Colonic mucosa (tissue), 4 donors: ENCODE measurements at regions of chr3 and their contacts with region 1.

Region 1: GRCh38 chr3:152269426-152270188 is 878 bp downstream of the MBNL1 start:
- DNase-seq: peak; percentile 76
- H3K4me3 ChIP-seq: peak overlapping the region; percentile 70
- H3K27ac ChIP-seq: peak overlapping the region; percentile 100
- H3K4me1 ChIP-seq: peaks cover 7% of the 10 kb centered on the region
- H3K27me3 ChIP-seq: no peaks in the 10 kb centered on the region
- CTCF ChIP-seq: no peak

Region 2: GRCh38 chr3:152309535-152310307 is 40.1 kb after region 1 on chr3:
- intact Hi-C with region 1: loop called (anchors 5 kb)
- DNase-seq: no peak
- H3K4me3 ChIP-seq: no peak overlapping the region
- H3K27ac ChIP-seq: peak overlapping the region; percentile 78
- H3K4me1 ChIP-seq: peaks cover 17% of the 10 kb centered on the region
- H3K27me3 ChIP-seq: no peaks in the 10 kb centered on the region
- CTCF ChIP-seq: no peak

Region 3: DNA sequence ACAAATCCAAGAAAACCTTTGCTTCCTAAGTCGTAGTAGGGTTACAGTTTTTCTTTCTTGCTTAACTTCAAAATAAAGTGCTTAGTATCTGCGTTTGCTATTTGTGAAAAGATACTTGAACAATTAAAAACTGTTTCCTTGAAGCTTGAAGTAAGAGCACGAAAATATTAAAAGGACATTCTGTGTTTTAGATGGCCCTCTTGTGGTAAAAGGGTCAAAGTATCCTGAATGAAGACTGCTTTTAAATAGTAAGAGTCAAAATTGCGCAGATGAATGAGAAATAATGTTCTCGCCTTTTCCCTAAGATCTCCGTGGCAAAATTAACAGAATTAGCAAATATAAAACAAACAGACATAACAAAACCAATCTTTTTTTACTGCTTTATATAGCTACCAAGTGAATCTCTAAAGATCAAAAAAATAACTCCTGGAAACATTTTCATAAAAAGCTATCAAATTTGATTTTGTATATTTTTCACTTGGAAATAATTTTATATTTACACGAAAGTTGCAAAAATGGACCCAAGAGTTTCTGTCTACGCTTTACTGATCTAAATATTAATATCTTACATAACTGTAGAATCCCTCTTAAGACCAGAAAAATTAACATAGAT is 174.5 kb after region 1 on chr3:
- intact Hi-C with region 1: loop called (anchors 10 kb)
- DNase-seq: no peak
- H3K4me3 ChIP-seq: no peak overlapping the region
- H3K27ac ChIP-seq: no peak overlapping the region
- H3K4me1 ChIP-seq: no peaks in the 10 kb centered on the region
- H3K27me3 ChIP-seq: no peaks in the 10 kb centered on the region
- CTCF ChIP-seq: peak; percentile 58

Region 4: GRCh38 chr3:152524198-152525140 is 254.9 kb after region 1 on chr3:
- intact Hi-C with region 1: no loop called
- DNase-seq: peak; percentile 42
- H3K4me3 ChIP-seq: no peak overlapping the region
- H3K27ac ChIP-seq: no peak overlapping the region
- H3K4me1 ChIP-seq: no peaks in the 10 kb centered on the region
- H3K27me3 ChIP-seq: no peaks in the 10 kb centered on the region
- CTCF ChIP-seq: peak; percentile 91